ENCODE measurements at regions of chr16 and their contacts with region 1.

Region 1: GRCh38 chr16:75234856-75235696 is 16.3 kb downstream of the CTRB1 start:
- DNase-seq: no peak
- H3K4me3 ChIP-seq: no peak overlapping the region
- H3K27ac ChIP-seq: peak overlapping the region; percentile 31
- H3K27me3 ChIP-seq: no peaks in the 10 kb centered on the region
- CTCF ChIP-seq: no peak

Region 2: DNA sequence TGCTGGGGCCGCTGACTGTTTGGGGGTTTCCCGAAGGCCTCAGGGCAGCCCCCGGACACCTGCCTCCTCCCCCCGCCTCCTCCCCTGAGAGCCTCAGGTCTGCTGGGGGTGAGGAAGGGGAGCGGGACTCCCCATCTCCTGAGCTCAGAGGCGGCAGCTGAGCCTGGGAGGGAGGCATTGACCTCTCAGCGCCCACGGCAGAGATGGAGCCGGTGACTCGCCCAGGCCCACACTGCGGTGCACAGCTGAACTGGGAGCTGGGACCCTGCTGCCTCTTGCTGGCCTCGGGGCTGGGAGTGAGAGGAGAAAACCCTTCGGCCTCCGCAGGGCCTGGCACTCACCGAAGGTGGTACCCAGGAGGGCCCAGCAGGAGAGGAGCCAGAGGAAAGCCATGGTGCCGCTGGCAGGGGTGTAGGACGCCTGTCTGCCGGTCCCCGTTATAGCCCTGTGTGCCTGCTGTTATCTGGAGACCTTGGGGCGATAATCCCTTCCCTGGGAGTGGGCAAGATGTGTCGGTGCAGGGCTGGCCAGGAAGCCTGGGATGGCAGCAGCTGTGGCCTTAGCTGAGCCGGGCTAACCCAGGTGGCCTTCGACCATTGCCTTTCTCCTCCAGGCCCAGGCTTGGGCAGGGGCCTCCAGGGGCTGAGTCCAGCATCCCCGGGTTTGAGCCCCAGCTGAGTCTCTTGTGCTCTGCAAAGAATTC is 28.2 kb before region 1 on chr16 and contains the start of gene CTRB2:
- CTCF ChIA-PET with region 1: interaction called, 12 read pairs
- POLR2A ChIA-PET with region 1: no interaction called
- DNase-seq: no peak
- H3K4me3 ChIP-seq: no peak within 1 kb of the TSS
- H3K27ac ChIP-seq: no peak within 1 kb of the TSS
- H3K27me3 ChIP-seq: peaks cover 3% of the 10 kb centered on the region
- CTCF ChIP-seq: no peak
- polyA plus RNA-seq, gene CTRB2: not detected in 2 replicates

Region 3: GRCh38 chr16:75251280-75252048 is 16.4 kb after region 1 on chr16 and contains the start of gene BCAR1:
- CTCF ChIA-PET with region 1: interaction called, 23 read pairs
- POLR2A ChIA-PET with region 1: interaction called, 12 read pairs
- DNase-seq: peak; percentile 73
- H3K4me3 ChIP-seq: peak within 1 kb of the TSS; percentile 84
- H3K27ac ChIP-seq: peak within 1 kb of the TSS; percentile 77
- H3K27me3 ChIP-seq: no peaks in the 10 kb centered on the region
- CTCF ChIP-seq: no peak
- polyA plus RNA-seq, gene BCAR1: 16.1 and 26.9 TPM in 2 replicates

Region 4: DNA sequence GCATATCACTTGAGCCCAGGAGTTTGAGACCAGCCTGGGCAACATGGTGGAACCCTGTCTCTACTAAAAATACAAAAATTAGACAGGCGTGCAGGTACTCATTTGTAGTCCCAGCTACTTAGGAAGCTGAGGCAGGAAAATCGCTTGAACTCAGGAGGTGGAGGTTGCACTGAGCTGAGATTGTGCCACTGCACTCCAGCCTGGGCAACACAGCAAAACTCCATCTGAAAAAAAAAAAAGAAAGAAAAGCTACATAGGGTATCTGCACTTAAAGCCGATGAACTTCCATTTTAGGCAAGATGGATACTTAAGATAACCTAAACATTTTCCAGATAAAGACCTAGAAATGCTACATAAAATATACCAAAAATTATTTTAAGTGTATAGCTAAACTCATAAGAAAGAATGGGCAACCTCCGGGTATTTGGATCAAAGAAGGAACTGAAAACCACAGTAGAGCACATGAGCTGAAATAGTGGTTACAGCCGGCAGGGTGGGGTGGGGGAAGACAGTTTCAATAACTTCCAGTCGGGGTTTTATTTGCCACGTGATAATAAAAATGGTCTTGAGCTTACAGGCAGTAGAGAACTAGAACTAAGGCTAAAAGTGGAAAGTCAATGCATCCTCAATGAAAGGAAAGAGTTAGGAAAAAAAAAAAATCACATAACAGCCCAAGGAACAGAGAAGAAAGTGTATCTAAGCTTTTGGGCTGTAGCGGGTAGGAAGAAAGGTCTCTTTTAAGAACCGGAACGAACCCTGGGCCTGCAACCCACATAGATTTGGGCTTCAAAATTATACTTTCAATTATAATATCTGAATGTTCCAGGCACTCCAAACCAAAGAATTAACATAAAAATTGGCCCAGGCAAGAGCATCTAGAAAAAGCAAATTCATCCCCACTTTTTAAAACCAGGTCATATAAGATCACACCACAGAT is 145.1 kb after region 1 on chr16:
- CTCF ChIA-PET with region 1: interaction called, 36 read pairs
- POLR2A ChIA-PET with region 1: interaction called, 3 read pairs
- DNase-seq: no peak
- H3K4me3 ChIP-seq: no peak overlapping the region
- H3K27ac ChIP-seq: no peak overlapping the region
- H3K27me3 ChIP-seq: no peaks in the 10 kb centered on the region
- CTCF ChIP-seq: no peak

Region 5: DNA sequence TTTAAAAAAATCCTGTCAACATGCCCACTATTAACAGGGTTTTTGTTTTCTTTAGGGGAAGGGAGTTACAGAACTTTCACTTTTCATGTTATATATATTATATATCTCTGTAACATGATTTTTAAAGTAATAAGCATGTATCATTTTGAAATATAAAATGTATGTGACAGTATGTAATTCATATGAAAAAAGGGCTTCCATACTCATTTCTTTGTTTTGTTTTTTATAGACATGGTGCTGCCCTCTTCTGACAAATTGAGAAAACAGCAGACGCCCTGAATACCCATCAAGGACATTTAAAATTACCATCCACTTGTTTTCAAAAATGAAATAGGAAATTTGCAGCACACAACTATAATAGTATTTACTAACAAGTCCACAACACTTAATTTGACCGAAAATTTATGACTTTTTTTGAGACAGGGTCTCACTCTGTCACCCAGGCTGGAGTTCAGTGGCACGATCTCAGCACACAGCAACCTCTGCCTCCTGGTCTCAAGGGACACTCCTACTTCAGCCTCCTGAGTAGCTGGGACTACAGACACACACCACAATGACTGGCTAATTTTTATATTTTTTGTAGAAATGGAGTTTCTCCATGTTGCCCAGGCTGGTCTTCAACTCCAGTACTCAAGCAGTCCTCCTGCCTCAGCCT is 167.9 kb after region 1 on chr16:
- CTCF ChIA-PET with region 1: interaction called, 28 read pairs
- POLR2A ChIA-PET with region 1: no interaction called
- DNase-seq: no peak
- H3K4me3 ChIP-seq: no peak overlapping the region
- H3K27ac ChIP-seq: no peak overlapping the region
- H3K27me3 ChIP-seq: no peaks in the 10 kb centered on the region
- CTCF ChIP-seq: peak; percentile 61